ENCODE measurements at regions of chr7 and their contacts with region 1.

Region 1: DNA sequence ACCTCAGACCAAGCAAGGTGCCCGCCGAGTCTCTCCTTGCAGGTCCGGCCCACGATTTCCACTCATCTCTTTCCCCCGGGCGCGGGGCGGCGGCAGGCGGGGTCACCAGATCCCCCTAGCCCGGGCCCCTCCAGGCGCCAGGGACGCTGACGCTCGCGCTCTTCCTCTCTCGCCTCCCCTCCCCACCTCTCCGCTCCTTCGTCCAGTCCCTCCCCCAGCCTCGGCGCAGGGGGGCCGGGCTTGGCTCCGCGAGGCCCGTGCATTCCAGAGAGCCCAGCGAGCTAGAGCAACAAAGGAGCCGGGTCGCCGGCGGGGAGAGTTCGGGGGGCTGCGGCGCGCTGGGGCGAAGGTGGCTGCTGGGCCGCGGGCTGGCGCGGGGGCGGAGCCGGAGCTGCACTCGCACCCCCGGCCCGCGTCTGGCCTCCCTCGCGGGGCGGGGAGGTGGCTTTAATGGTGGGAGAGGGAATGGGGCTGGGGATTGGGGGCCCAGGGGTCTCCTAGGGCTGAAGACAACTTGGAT is at the start of gene SMO:
- DNase-seq: peak; percentile 81
- H3K4me3 ChIP-seq: peak within 1 kb of the TSS; percentile 42 to 93 (median 72)
- H3K27ac ChIP-seq: peak within 1 kb of the TSS; percentile 56 to 70 (median 59)
- H3K4me1 ChIP-seq: peaks cover 0 to 27% (median 18%) of the 10 kb centered on the region in 4 donors
- H3K27me3 ChIP-seq: no peaks in the 10 kb centered on the region
- CTCF ChIP-seq: no peak
- EP300 ChIP-seq: no peak
- POLR2A ChIP-seq: no peak
- total RNA-seq, gene SMO: 6.8 to 18.6 (median 13.0) TPM

Region 2: GRCh38 chr7:128084896-128085608 is 1103.4 kb before region 1 on chr7:
- intact Hi-C with region 1: no loop called
- DNase-seq: no peak
- H3K4me3 ChIP-seq: no peak overlapping the region
- H3K27ac ChIP-seq: no peak overlapping the region
- H3K4me1 ChIP-seq: no peaks in the 10 kb centered on the region
- H3K27me3 ChIP-seq: no peaks in the 10 kb centered on the region
- CTCF ChIP-seq: no peak
- EP300 ChIP-seq: no peak
- POLR2A ChIP-seq: no peak

Region 3: DNA sequence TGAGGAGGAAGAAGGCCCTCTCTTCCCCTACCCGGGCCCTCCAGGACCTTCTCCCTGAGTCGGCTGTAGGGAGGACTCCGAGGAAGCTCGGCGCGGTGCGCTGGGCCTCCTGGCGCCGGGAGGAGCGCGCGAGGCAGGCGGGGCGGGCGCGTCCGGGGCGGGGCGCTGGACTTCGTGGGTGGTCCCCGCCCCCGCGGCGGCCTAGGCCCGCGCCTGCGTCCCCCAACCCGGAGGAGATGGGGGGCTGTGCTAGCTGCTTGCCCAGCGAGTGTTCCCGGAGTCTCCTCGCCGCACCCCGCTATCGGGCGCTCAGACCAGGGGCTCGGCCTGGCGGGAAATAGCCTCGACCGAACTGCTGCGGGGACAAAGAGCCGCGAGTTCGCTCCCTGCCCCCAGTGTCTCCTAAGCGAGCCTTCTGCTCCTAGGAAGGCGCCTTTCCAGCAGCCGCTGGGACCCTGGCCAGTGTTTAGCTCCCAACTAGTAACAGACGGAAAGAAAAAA is 19.2 kb before region 1 on chr7:
- intact Hi-C with region 1: loop called (anchors 2 kb)
- DNase-seq: peak; percentile 77
- H3K4me3 ChIP-seq: peak overlapping the region; percentile 39 to 54 (median 49)
- H3K27ac ChIP-seq: peak overlapping the region; percentile 40 to 64 (median 60)
- H3K4me1 ChIP-seq: peaks cover 0 to 26% (median 20%) of the 10 kb centered on the region in 4 donors
- H3K27me3 ChIP-seq: no peaks in the 10 kb centered on the region
- CTCF ChIP-seq: no peak
- EP300 ChIP-seq: no peak
- POLR2A ChIP-seq: no peak

Region 4: DNA sequence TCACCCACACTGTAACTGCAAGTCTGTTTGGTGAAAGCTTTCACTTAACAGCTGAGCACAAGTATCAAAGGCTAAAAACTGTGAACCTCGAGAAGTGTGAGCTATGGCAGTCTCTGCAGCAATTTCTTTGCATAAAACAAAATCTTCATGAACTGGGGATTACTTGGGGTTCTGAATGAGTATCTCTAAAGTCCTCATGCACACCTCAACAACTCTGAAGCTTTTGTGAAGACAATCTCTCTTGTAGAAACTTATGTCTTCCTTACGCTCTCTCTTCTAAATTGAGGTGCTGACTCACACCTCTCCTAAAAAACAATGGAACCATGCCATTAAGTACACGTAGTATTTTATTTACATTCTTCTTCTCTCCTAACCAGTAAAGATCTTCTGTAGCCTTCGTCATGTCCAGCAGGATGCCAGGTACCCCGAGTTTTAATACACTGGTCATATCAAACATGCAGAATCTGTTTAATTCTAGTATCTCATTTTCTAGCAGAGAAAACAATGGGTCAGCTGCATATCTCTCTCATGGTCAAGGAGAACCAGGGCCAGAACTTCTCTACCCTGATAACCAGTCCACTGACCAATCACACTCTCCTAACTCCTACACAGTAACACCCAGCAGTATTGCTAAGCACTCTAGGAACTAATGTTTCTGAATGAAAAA is 687.4 kb after region 1 on chr7:
- intact Hi-C with region 1: no loop called
- DNase-seq: no peak
- H3K4me3 ChIP-seq: peak overlapping the region in 1 of 4 donors; percentile 8
- H3K27ac ChIP-seq: peak overlapping the region; percentile 5 to 62 (median 56)
- H3K4me1 ChIP-seq: peaks cover 0 to 40% (median 26%) of the 10 kb centered on the region in 4 donors
- H3K27me3 ChIP-seq: no peaks in the 10 kb centered on the region
- CTCF ChIP-seq: no peak
- EP300 ChIP-seq: no peak
- POLR2A ChIP-seq: no peak